Activated CD8-positive, alpha-beta T cell treated with anti-CD3 and anti-CD28 coated beads for 36 hours (primary cell): ENCODE measurements at regions of chr9 and their contacts with region 1.

Region 1: DNA sequence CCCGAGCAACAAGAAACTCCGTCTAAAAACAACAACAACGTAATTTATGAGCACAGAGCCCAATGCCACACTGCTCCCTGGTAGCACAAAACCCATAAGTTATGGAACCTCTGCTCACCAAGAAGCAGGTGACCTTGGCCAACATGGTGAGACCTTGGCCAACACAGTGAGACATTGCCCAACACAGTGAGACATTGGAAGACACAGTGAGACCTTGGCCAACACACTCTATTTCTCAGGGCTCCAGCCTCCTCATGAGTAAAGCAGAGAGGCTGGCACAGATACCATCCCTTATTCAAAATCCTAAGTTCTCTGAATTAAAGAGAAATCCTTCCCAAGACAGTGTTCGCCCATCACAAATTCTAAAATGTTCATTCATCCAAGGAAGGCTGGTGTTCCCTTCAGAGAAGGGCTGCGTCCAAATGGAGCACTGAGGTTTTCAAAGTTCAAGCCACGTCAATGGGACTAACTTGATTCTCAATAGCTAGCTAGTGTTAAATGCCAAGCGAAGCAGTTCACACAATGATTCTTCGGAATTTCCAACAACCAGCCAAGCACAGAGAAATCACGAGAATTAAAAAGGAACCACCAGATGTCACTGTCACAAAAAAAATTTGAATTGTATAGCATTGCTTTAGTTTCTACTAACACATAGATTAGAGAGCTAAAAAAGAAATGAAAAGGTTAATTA is 29.5 kb downstream of the TTC39B start:
- DNase-seq: no peak
- ATAC-seq: peak; percentile 51
- H3K4me3 Mint-ChIP-seq: no peak overlapping the region
- H3K27ac Mint-ChIP-seq: no peak overlapping the region
- H3K4me1 Mint-ChIP-seq: peaks cover 29% of the 10 kb centered on the region
- H3K27me3 Mint-ChIP-seq: no peaks in the 10 kb centered on the region
- CTCF ChIP-seq: peak; percentile 48

Region 2: GRCh38 chr9:15135164-15135792 is 142.3 kb before region 1 on chr9:
- CTCF ChIA-PET with region 1: no interaction called
- POLR2A ChIA-PET with region 1: no interaction called
- intact Hi-C with region 1: no loop called
- DNase-seq: peak; percentile 51
- ATAC-seq: peak; percentile 91
- H3K4me3 Mint-ChIP-seq: no peak overlapping the region
- H3K27ac Mint-ChIP-seq: no peak overlapping the region
- H3K4me1 Mint-ChIP-seq: no peaks in the 10 kb centered on the region
- H3K27me3 Mint-ChIP-seq: no peaks in the 10 kb centered on the region
- CTCF ChIP-seq: peak; percentile 84

Region 3: GRCh38 chr9:15310107-15310850 is 32.7 kb after region 1 on chr9:
- CTCF ChIA-PET with region 1: interaction called, 10 read pairs
- POLR2A ChIA-PET with region 1: interaction called, 3 read pairs
- intact Hi-C with region 1: no loop called
- DNase-seq: peak; percentile 30
- ATAC-seq: peak; percentile 69
- H3K4me3 Mint-ChIP-seq: peak overlapping the region; percentile 33
- H3K27ac Mint-ChIP-seq: peak overlapping the region; percentile 88
- H3K4me1 Mint-ChIP-seq: peaks cover 34% of the 10 kb centered on the region
- H3K27me3 Mint-ChIP-seq: no peaks in the 10 kb centered on the region
- CTCF ChIP-seq: no peak

Region 4: GRCh38 chr9:15422372-15423230 is 145.1 kb after region 1 on chr9 and contains the start of gene SNAPC3:
- CTCF ChIA-PET with region 1: interaction called, 9 read pairs
- POLR2A ChIA-PET with region 1: no interaction called
- intact Hi-C with region 1: loop called (anchors 5 kb)
- DNase-seq: peak; percentile 94
- ATAC-seq: peak; percentile 97
- H3K4me3 Mint-ChIP-seq: peak within 1 kb of the TSS; percentile 95
- H3K27ac Mint-ChIP-seq: peak within 1 kb of the TSS; percentile 89
- H3K4me1 Mint-ChIP-seq: peaks cover 26% of the 10 kb centered on the region
- H3K27me3 Mint-ChIP-seq: no peaks in the 10 kb centered on the region
- CTCF ChIP-seq: no peak
- total RNA-seq, gene SNAPC3: 30.3 to 32.1 TPM

Region 5: DNA sequence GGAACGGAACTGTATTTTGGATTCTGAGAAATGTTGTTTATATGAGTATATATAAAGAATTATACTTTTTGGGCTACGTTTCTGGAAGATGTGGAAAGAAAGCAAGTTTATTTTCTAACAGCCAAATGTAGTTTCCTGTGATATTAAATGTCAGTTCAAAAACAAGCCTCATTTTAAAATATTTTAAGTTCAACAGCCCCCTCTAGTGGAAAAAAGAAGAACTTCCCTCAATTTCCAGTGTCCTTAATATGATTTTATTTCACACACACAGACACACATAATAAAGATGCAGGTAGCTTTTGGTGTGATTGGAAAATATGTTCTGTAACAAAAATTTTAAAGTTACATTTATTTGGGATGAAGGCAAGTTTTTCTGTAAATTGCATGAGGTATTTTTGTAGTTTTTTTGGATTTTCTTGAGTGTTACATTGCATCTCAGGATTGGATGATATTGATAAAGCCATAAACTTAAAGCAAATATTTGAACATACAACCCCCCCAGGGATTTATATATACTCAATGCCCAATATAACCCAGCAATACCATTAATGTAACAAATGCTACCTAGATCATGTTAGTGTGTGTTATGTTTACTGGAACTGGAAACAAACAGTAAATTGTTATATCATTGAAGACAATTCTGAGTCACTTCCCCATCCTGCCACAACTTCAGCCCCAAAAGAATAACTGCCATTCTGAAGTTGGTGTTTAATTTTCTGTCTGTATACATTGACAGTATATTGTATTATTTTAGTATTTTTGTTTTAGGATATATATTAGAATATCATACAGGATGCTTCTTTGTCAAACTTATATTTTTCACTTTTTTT is 329.3 kb after region 1 on chr9:
- CTCF ChIA-PET with region 1: interaction called, 5 read pairs
- POLR2A ChIA-PET with region 1: no interaction called
- intact Hi-C with region 1: loop called (anchors 10 kb)
- DNase-seq: peak; percentile 2
- ATAC-seq: peak; percentile 70
- H3K4me3 Mint-ChIP-seq: no peak overlapping the region
- H3K27ac Mint-ChIP-seq: no peak overlapping the region
- H3K4me1 Mint-ChIP-seq: peaks cover 4% of the 10 kb centered on the region
- H3K27me3 Mint-ChIP-seq: no peaks in the 10 kb centered on the region
- CTCF ChIP-seq: peak; percentile 78